ENCODE measurements at regions of chr12 and their contacts with region 1.

Region 1: GRCh38 chr12:104515924-104516323 is 59.2 kb downstream of the CHST11 start:
- DNase-seq: no peak
- H3K4me3 ChIP-seq: no peak overlapping the region
- H3K27ac ChIP-seq: no peak overlapping the region
- H3K4me1 ChIP-seq: peaks cover 0 to 14% (median 2%) of the 10 kb centered on the region in 4 donors
- H3K27me3 ChIP-seq: no peaks in the 10 kb centered on the region
- CTCF ChIP-seq: no peak
- EP300 ChIP-seq: no peak
- POLR2A ChIP-seq: no peak

Region 2: DNA sequence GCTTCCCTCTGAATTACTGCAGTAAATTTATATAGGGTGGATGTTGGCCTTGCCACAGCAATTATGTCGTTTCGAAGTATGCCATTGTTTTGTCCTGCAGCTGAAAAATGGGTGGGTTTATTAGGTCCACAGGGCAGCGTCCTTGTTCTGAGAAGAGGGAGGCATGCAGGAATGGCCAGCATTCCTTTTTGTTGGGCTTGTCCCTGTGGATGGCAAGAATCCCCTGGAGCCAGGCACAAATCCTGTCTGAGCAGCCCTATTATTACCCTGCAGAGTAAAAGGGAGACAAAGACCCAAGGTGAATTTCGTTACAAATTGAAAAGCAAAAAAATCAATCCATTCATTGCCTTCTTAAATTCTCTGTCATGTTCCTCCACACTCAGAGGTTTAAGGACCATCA is 28.9 kb after region 1 on chr12:
- in situ Hi-C with region 1: no loop called
- intact Hi-C with region 1: loop called (anchors 1 kb)
- DNase-seq: no peak
- H3K4me3 ChIP-seq: no peak overlapping the region
- H3K27ac ChIP-seq: no peak overlapping the region
- H3K4me1 ChIP-seq: no peaks in the 10 kb centered on the region
- H3K27me3 ChIP-seq: no peaks in the 10 kb centered on the region
- CTCF ChIP-seq: no peak
- EP300 ChIP-seq: no peak
- POLR2A ChIP-seq: no peak